ENCODE measurements at regions of chr1 and their contacts with region 1.

Region 1: GRCh38 chr1:22416555-22417454 is 34.8 kb upstream of the ZBTB40 start:
- DNase-seq: peak; percentile 53
- H3K4me3 ChIP-seq: no peak overlapping the region
- H3K27ac ChIP-seq: no peak overlapping the region
- H3K4me1 ChIP-seq: peaks cover 6% of the 10 kb centered on the region
- H3K27me3 ChIP-seq: no peaks in the 10 kb centered on the region
- CTCF ChIP-seq: peak; percentile 88 to 99

Region 2: DNA sequence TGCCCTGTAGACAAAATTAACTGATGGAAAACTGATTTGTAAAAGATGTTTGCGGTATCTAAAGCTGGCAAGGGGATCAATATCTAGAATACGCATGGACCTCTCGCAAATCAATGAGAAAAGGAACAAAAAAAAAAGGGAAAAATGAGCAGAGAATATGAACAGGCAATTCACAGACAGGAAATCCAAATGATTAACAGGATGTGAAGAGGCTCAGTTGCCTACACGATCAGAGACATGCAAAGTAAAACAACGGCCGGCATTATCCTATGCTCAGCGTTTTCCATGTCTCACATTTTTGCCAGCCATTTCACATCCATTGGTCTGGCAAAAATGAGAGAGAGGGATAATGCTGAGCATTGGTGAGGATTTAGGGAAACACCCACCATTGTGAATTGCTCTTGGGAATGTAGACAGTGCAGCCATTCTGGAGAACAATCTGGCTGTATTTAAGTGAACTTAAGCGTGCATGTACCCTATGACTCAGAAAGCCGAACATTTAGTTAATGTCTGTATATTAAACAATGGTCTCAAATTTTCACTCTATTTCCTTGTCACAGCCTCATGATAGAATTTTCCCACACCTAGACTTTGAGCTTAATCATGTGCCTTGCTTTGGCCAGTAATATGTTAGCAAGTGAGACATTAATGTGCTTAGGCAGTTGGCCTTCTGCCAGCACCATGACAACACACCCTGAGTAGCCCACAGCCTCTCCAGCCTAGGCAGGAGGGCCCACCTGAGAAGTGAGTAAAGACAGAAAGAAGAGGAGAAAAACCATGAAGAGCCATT is 1037.9 kb before region 1 on chr1:
- CTCF ChIA-PET with region 1: no interaction called
- dilution Hi-C with region 1: no loop called
- in situ Hi-C with region 1: no loop called
- intact Hi-C with region 1: loop called (anchors 10 kb)
- DNase-seq: no peak
- H3K4me3 ChIP-seq: no peak overlapping the region
- H3K27ac ChIP-seq: no peak overlapping the region
- H3K4me1 ChIP-seq: no peaks in the 10 kb centered on the region
- H3K27me3 ChIP-seq: no peaks in the 10 kb centered on the region
- CTCF ChIP-seq: no peak

Region 3: GRCh38 chr1:21703318-21703963 is 713.4 kb before region 1 on chr1:
- CTCF ChIA-PET with region 1: interaction called, 3 read pairs
- dilution Hi-C with region 1: no loop called
- in situ Hi-C with region 1: no loop called
- intact Hi-C with region 1: loop called (anchors 5 kb)
- DNase-seq: peak; percentile 23
- H3K4me3 ChIP-seq: no peak overlapping the region
- H3K27ac ChIP-seq: no peak overlapping the region
- H3K4me1 ChIP-seq: no peaks in the 10 kb centered on the region
- H3K27me3 ChIP-seq: no peaks in the 10 kb centered on the region
- CTCF ChIP-seq: peak; percentile 40 to 43

Region 4: DNA sequence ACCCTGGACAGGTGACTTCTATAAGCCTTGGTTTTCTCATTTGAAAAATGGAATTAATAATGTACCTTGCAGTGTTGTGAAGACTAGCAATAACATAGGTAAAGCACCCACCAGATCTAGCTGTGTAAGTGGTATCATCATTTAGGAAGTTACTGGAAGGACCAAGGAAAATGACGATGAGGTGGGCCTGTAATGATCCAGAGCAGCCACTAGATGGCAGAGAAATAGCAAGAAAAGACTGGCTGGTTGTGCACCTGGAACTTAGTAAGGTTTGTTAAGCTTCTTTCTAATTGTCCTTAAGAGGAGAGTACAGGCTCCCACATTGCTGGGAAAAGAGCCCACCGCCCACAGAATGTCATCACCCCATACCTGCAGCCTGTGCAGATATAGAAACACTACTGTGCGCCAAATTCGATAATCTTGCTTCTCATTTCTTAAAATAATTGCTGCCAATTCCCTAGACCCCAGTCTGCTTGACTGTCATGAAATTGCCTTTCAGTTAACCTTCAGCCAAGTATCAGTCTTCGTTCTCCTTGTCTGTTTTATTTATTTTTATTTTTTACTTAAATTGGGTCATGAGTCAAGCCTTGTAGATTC is 311.1 kb before region 1 on chr1:
- CTCF ChIA-PET with region 1: no interaction called
- dilution Hi-C with region 1: loop called (anchors 5 kb)
- in situ Hi-C with region 1: loop called in 1 of 2 experiments (anchors 5 kb)
- intact Hi-C with region 1: loop called (anchors 1 kb)
- DNase-seq: peak; percentile 47
- H3K4me3 ChIP-seq: no peak overlapping the region
- H3K27ac ChIP-seq: no peak overlapping the region
- H3K4me1 ChIP-seq: peaks cover 17% of the 10 kb centered on the region
- H3K27me3 ChIP-seq: no peaks in the 10 kb centered on the region
- CTCF ChIP-seq: peak; percentile 80 to 89

Region 5: GRCh38 chr1:22275721-22276395 is 140.9 kb before region 1 on chr1:
- CTCF ChIA-PET with region 1: no interaction called
- dilution Hi-C with region 1: no loop called
- in situ Hi-C with region 1: no loop called
- intact Hi-C with region 1: loop called (anchors 1 kb)
- DNase-seq: peak; percentile 39
- H3K4me3 ChIP-seq: no peak overlapping the region
- H3K27ac ChIP-seq: no peak overlapping the region
- H3K4me1 ChIP-seq: peaks cover 8% of the 10 kb centered on the region
- H3K27me3 ChIP-seq: no peaks in the 10 kb centered on the region
- CTCF ChIP-seq: peak; percentile 76 to 93

Region 6: GRCh38 chr1:22930235-22930912 is 513.6 kb after region 1 on chr1:
- CTCF ChIA-PET with region 1: no interaction called
- dilution Hi-C with region 1: no loop called
- in situ Hi-C with region 1: no loop called
- intact Hi-C with region 1: loop called (anchors 1 kb)
- DNase-seq: peak; percentile 16
- H3K4me3 ChIP-seq: no peak overlapping the region
- H3K27ac ChIP-seq: no peak overlapping the region
- H3K4me1 ChIP-seq: no peaks in the 10 kb centered on the region
- H3K27me3 ChIP-seq: no peaks in the 10 kb centered on the region
- CTCF ChIP-seq: peak; percentile 67 to 82